CD4-positive, alpha-beta memory T cell (primary cell): ENCODE measurements at regions of chr2 and their contacts with region 1.

Region 1: DNA sequence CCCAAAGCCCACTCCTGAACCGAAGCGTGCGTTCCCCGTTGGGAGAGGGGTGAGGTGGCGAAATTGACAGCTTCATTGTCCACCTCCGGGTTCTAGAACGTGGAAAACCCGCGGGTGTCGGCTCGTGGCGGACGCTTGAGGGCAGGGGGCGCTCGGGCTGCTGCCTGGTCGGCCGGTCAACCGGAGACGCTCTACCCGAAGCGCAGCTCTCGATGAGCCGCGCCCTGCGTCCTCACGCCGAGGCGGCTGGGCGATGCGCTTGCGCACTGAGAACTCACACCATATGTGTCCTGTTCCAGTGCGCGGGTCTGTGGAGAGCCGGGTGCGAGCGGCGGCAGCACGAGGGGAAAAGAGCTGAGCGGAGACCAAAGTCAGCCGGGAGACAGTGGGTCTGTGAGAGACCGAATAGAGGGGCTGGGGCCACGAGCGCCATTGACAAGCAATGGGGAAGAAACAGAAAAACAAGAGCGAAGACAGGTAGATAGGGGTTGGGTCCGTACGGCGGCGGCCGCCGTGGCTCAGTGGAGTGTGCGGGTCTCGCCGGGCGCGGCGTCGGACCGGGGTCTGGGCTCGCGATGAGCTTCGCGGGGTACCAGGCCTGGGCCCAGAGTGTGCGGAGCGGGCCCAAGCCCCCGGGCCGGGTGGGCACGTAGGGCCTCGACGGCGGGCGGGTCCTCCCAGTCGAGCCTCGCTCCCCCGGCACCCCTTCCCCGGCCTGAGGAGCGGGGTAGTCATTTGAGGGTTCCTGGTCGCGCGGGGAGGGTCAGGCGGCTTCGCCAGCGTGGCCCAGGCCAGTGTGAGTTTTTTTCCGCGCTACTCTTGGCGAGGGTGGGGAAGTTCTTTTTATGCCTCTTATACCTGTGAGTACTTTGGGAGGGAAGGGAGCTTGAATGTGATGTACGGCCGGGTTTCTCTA is at the start of gene EIF5B:
- DNase-seq: peak; percentile 87 to 90 (median 87)
- H3K4me3 ChIP-seq: peak within 1 kb of the TSS; percentile 73 to 86
- H3K4me3 Mint-ChIP-seq: no peak within 1 kb of the TSS
- H3K27ac ChIP-seq: peak within 1 kb of the TSS; percentile 70
- H3K27ac Mint-ChIP-seq: no peak within 1 kb of the TSS
- H3K4me1 ChIP-seq: peaks cover 51% of the 10 kb centered on the region
- H3K4me1 Mint-ChIP-seq: peaks cover 23 to 48% (median 26%) of the 10 kb centered on the region in 4 donors
- H3K27me3 ChIP-seq: no peaks in the 10 kb centered on the region
- H3K27me3 Mint-ChIP-seq: no peaks in the 10 kb centered on the region
- total RNA-seq, gene EIF5B: 36.2 to 44.2 TPM

Region 2: GRCh38 chr2:97663965-97664635 is 1673.3 kb before region 1 on chr2 and contains the start of gene ACTR1B:
- CTCF ChIA-PET with region 1: no interaction called
- POLR2A ChIA-PET with region 1: no interaction called
- intact Hi-C with region 1: loop called (anchors 2 kb)
- DNase-seq: peak; percentile 97 to 99 (median 98)
- H3K4me3 ChIP-seq: peak within 1 kb of the TSS; percentile 52 to 99
- H3K4me3 Mint-ChIP-seq: peak within 1 kb of the TSS; percentile 92 to 97 (median 96)
- H3K27ac ChIP-seq: peak within 1 kb of the TSS; percentile 92
- H3K27ac Mint-ChIP-seq: peak within 1 kb of the TSS; percentile 98 to 100 (median 99)
- H3K4me1 ChIP-seq: peaks cover 36% of the 10 kb centered on the region
- H3K4me1 Mint-ChIP-seq: peaks cover 15 to 41% (median 23%) of the 10 kb centered on the region in 4 donors
- H3K27me3 ChIP-seq: no peaks in the 10 kb centered on the region
- H3K27me3 Mint-ChIP-seq: no peaks in the 10 kb centered on the region
- total RNA-seq, gene ACTR1B: 96.1 to 97.6 TPM

Region 3: DNA sequence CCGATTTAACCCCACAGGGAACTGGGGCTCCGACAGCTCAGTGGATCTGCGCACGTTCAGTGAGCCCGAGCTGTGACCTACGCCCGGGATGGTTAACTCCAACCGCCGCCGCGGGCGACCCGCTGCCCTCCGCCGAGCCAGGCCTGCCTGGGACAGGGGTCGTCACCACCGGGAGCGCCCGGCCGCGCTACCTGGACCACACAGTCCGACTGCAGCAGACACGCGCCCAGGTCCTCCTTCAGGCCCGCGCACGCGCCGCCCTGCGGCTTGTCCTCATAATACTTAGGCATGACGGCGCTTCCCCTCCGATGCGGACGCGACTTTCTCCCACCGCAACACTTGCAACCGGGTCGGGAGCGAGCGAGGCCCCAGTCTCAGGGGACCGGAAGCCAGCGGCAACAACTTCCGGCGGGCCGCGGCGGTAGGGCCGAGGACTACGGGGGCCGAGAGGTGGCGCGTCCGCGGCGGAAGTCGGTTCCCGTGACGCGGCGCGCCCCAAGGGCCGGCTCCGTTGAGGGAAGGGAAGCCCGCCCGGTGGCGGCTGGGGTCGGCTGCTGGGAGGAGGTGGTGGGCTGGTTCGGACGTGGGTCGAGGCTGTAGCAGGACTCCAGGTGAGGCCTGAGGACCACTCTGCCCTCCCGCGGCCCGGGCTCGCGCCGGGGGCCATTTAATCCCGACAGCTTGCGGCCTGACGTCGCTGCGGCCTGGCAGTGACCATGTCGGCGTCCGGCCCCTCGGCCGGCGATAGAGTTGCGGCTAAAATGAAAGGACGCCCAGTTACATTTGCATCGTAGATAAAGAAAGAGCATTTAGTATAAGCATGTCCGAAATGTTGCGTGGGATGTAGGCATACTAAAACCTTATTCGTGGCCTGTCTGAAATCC is 729.0 kb before region 1 on chr2 and contains the starts of genes COA5 and UNC50:
- CTCF ChIA-PET with region 1: no interaction called
- POLR2A ChIA-PET with region 1: no interaction called
- intact Hi-C with region 1: loop called (anchors 2 kb)
- DNase-seq: peak; percentile 87 to 91 (median 88)
- H3K4me3 ChIP-seq: peak within 1 kb of the TSS; percentile 86 to 93
- H3K4me3 Mint-ChIP-seq: peak within 1 kb of the TSS; percentile 79 to 95 (median 89)
- H3K27ac ChIP-seq: peak within 1 kb of the TSS; percentile 88
- H3K27ac Mint-ChIP-seq: peak within 1 kb of the TSS; percentile 89 to 97 (median 91)
- H3K4me1 ChIP-seq: peaks cover 61% of the 10 kb centered on the region
- H3K4me1 Mint-ChIP-seq: peaks cover 51 to 91% (median 59%) of the 10 kb centered on the region in 4 donors
- H3K27me3 ChIP-seq: no peaks in the 10 kb centered on the region
- H3K27me3 Mint-ChIP-seq: no peaks in the 10 kb centered on the region
- total RNA-seq, gene COA5: 51.3 to 52.4 TPM
- total RNA-seq, gene UNC50: 43.5 to 47.2 TPM

Region 4: GRCh38 chr2:98985905-98986666 is 351.3 kb before region 1 on chr2:
- CTCF ChIA-PET with region 1: no interaction called
- POLR2A ChIA-PET with region 1: no interaction called
- intact Hi-C with region 1: no loop called
- DNase-seq: no peak
- H3K4me3 ChIP-seq: no peak overlapping the region
- H3K4me3 Mint-ChIP-seq: no peak overlapping the region
- H3K27ac ChIP-seq: no peak overlapping the region
- H3K27ac Mint-ChIP-seq: no peak overlapping the region
- H3K4me1 ChIP-seq: no peaks in the 10 kb centered on the region
- H3K4me1 Mint-ChIP-seq: no peaks in the 10 kb centered on the region
- H3K27me3 ChIP-seq: no peaks in the 10 kb centered on the region
- H3K27me3 Mint-ChIP-seq: peaks cover 1 to 2% of the 10 kb centered on the region in 2 donors

Region 5: GRCh38 chr2:99141110-99142108 is 196.0 kb before region 1 on chr2 and contains the start of gene C2orf15:
- CTCF ChIA-PET with region 1: interaction called, 5 read pairs
- POLR2A ChIA-PET with region 1: interaction called, 22 read pairs
- intact Hi-C with region 1: loop called (anchors 1 kb)
- DNase-seq: peak; percentile 97 to 98 (median 97)
- H3K4me3 ChIP-seq: peak within 1 kb of the TSS; percentile 50 to 97
- H3K4me3 Mint-ChIP-seq: peak within 1 kb of the TSS; percentile 93 to 99 (median 96)
- H3K27ac ChIP-seq: peak within 1 kb of the TSS; percentile 86
- H3K27ac Mint-ChIP-seq: peak within 1 kb of the TSS; percentile 96 to 99 (median 98)
- H3K4me1 ChIP-seq: peaks cover 18% of the 10 kb centered on the region
- H3K4me1 Mint-ChIP-seq: peaks cover 11 to 31% (median 17%) of the 10 kb centered on the region in 4 donors
- H3K27me3 ChIP-seq: no peaks in the 10 kb centered on the region
- H3K27me3 Mint-ChIP-seq: no peaks in the 10 kb centered on the region
- total RNA-seq, gene C2orf15: 2.3 to 3.2 TPM

Region 6: GRCh38 chr2:99180755-99181623 is 156.4 kb before region 1 on chr2 and contains the starts of genes MITD1 and MRPL30:
- CTCF ChIA-PET with region 1: interaction called, 22 read pairs
- POLR2A ChIA-PET with region 1: interaction called, 9 read pairs
- intact Hi-C with region 1: loop called (anchors 1 kb)
- DNase-seq: peak; percentile 91 to 93 (median 92)
- H3K4me3 ChIP-seq: peak within 1 kb of the TSS; percentile 70 to 71
- H3K4me3 Mint-ChIP-seq: peak within 1 kb of the TSS; percentile 98 to 100 (median 99)
- H3K27ac ChIP-seq: peak within 1 kb of the TSS; percentile 91
- H3K27ac Mint-ChIP-seq: peak within 1 kb of the TSS; percentile 93 to 100 (median 99)
- H3K4me1 ChIP-seq: peaks cover 57% of the 10 kb centered on the region
- H3K4me1 Mint-ChIP-seq: peaks cover 41 to 79% (median 60%) of the 10 kb centered on the region in 4 donors
- H3K27me3 ChIP-seq: no peaks in the 10 kb centered on the region
- H3K27me3 Mint-ChIP-seq: no peaks in the 10 kb centered on the region
- total RNA-seq, gene MITD1: 79.1 to 84.3 TPM
- total RNA-seq, gene MRPL30: 20.2 to 22.7 TPM

Region 7: GRCh38 chr2:99297994-99298393 is 39.4 kb before region 1 on chr2:
- CTCF ChIA-PET with region 1: no interaction called
- POLR2A ChIA-PET with region 1: no interaction called
- intact Hi-C with region 1: no loop called
- DNase-seq: no peak
- H3K4me3 ChIP-seq: no peak overlapping the region
- H3K4me3 Mint-ChIP-seq: no peak overlapping the region
- H3K27ac ChIP-seq: no peak overlapping the region
- H3K27ac Mint-ChIP-seq: no peak overlapping the region
- H3K4me1 ChIP-seq: no peaks in the 10 kb centered on the region
- H3K4me1 Mint-ChIP-seq: no peaks in the 10 kb centered on the region
- H3K27me3 ChIP-seq: no peaks in the 10 kb centered on the region
- H3K27me3 Mint-ChIP-seq: no peaks in the 10 kb centered on the region

Region 8: DNA sequence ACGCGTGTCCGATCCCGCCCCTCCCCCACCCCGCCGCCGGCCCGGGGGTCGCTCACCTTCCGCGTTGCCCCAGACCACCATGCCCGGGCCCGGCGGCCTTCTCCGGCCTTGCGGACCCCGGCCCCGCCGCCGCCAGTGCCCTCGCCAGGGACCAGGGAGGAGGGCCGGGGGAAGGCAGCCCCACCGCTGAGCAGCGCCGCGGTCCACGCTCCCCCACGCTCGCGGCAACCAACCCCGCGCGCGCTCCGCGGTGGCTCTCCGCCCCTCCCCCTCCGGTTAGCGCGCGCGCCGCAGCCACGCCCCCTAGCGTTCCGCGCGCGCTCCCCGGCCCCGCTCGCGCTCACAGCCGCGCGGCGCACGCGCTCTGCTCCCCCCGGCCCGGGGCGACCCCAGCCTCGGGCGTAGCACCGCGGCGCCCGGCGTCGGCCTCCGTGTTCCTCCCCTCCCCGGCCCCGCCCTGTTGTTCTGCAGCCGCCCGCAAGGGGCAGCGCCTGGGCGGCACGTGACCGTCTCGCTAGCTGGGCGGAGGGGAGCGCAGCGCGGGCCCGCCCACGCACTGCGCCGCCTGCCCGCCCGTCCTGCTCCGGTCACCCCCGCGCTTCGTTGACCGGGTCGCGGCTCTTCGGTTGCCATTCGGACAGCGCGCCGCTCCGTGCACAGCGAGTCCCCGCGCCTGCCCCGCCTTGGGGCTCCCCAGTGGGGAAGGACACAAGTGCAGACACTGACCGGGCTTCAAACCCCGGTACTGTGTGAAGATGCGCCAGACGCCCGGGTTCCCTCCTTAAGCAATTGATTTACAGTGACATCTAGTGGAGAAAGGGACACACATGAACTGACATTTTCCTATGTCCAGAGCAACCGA is 152.6 kb after region 1 on chr2 and contains the start of gene REV1:
- CTCF ChIA-PET with region 1: interaction called, 24 read pairs
- POLR2A ChIA-PET with region 1: interaction called, 12 read pairs
- intact Hi-C with region 1: loop called (anchors 1 kb)
- DNase-seq: peak; percentile 95 to 98 (median 96)
- H3K4me3 ChIP-seq: peak within 1 kb of the TSS; percentile 76 to 89
- H3K4me3 Mint-ChIP-seq: peak within 1 kb of the TSS; percentile 94 to 100 (median 98)
- H3K27ac ChIP-seq: peak within 1 kb of the TSS; percentile 69
- H3K27ac Mint-ChIP-seq: peak within 1 kb of the TSS; percentile 95 to 99 (median 98)
- H3K4me1 ChIP-seq: peaks cover 35% of the 10 kb centered on the region
- H3K4me1 Mint-ChIP-seq: peaks cover 24 to 43% (median 32%) of the 10 kb centered on the region in 4 donors
- H3K27me3 ChIP-seq: no peaks in the 10 kb centered on the region
- H3K27me3 Mint-ChIP-seq: peaks cover 3 to 5% of the 10 kb centered on the region in 2 donors
- total RNA-seq, gene REV1: 60.1 to 62.0 TPM

Region 9: DNA sequence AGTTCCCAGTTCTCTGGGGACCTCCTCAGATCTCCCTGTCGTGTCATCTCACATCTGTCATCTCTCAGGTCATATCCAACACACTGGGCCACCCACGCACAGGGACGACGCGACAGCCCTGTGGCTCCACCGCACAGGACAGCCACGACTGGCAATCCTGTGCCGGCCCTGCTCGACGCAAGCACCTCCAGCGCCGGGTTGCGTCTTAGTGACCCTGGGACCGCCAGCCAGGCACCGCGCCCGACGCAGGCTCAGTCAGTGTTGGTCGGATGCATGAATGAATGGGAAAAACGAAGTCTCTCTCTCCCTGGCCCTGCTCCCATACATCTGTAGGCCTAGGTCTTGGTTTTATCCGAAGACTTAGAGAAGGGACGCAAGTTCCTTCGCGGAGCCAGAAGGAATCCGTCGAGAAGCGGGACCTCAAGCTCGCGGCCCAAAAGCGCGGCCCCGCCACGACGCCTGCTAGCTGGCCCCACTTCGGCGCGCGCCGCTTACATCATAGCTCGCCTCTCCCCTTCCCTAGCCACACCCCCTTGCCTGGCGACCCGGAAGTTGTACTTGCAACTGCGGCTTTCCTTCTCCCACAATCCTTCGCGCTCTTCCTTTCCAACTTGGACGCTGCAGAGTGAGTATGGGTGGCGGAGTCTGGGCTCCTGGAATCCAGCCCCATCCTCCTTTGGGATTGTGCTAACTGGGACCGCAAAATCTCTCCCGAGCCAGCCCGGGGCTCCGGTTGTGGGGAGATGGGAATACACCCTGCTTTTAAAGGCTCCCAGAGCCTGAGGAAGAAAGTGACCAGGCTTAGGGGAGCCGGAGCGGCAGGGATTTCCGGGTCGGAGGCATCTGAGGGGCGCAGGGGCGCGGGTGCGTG is 1664.6 kb after region 1 on chr2 and contains the start of gene RPL31:
- CTCF ChIA-PET with region 1: no interaction called
- POLR2A ChIA-PET with region 1: no interaction called
- intact Hi-C with region 1: loop called (anchors 5 kb)
- DNase-seq: peak; percentile 93 to 98 (median 96)
- H3K4me3 ChIP-seq: peak within 1 kb of the TSS; percentile 97 to 98
- H3K4me3 Mint-ChIP-seq: peak within 1 kb of the TSS; percentile 90 to 96 (median 95)
- H3K27ac ChIP-seq: peak within 1 kb of the TSS; percentile 91
- H3K27ac Mint-ChIP-seq: peak within 1 kb of the TSS; percentile 91 to 99 (median 98)
- H3K4me1 ChIP-seq: peaks cover 37% of the 10 kb centered on the region
- H3K4me1 Mint-ChIP-seq: peaks cover 32 to 51% (median 45%) of the 10 kb centered on the region in 4 donors
- H3K27me3 ChIP-seq: no peaks in the 10 kb centered on the region
- H3K27me3 Mint-ChIP-seq: no peaks in the 10 kb centered on the region
- total RNA-seq, gene RPL31: 2,455 to 2,531 TPM